ENCODE measurements at regions of chr19 and their contacts with region 1.

Region 1: DNA sequence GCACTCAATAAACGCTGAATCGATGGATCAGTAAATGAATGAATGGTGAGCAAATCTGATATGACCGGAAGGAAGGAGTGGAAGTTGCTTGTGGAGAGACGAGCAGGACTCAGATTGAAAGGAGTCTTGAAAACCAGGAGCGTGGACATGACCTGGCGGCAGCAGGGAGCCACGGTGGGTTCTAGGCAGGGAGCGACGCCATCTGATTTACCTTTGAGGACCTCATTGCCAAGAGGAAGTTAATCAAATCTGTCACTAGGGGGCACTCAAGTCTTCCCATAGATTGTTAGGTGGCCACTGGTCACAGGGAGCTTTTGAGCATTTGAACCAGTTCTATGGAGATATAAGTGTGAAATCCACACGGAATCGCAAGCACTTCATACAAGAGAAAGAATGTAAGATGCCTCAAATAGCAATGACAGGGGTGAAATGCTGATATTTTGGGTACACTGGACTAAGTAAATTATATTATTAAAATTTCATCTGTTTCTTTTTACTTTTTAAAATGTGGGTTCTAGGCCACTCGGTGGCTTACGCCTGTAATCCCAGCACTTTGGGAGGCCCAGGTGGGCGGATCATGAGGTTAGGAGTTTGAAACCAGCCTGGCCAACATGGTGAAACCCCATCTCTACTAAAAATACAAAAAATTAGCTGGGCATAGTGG is 9.2 kb upstream of the FBN3 start:
- DNase-seq: no peak
- ATAC-seq: peak; percentile 64 to 69
- H3K4me3 ChIP-seq: no peak overlapping the region
- H3K27ac ChIP-seq: no peak overlapping the region
- H3K4me1 ChIP-seq: peaks cover 5% of the 10 kb centered on the region
- H3K27me3 ChIP-seq: no peaks in the 10 kb centered on the region

Region 2: DNA sequence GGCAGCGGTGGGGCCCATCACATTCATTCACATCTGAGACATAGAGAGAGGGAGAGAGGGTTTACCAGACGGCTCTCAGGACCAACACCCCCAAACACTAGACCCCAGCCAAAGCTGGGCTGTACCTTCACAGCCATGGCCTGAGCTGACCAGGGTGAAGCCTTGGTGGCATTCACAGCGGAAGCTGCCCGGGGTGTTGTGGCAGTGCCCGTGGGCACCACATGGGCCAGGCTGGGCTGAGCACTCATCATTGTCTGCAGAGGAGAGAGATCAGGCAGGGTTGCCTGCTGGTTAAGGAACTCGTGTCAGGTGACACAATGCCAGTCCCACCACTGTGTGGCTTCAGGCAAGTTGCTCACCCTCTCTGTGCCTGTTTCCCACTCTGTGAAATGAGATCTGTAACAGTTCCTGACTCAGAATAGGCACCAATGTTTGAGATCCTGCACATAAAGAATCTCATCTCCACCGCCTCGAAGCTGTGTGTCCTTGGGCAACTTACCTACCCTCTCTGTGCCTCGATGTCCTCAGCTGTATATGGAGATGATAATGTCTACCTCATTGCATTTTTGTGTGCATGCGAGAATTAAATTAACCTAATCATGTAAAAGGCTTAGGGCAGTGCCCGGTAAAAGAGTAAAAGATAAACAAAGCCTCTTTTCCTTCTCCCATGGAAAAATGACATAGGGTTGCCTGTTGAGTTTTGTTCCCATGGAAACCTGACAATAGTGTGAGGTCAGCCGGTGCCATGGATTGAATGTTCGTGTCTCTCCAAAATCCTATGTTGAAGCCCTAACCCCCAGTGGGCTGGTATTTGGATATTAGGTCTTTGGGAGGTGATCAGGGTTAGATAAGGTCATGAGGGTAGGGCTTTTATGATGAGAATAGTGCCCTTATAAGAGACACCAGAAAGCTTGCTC is 83.1 kb before region 1 on chr19:
- intact Hi-C with region 1: no loop called
- DNase-seq: no peak
- ATAC-seq: no peak
- H3K4me3 ChIP-seq: no peak overlapping the region
- H3K27ac ChIP-seq: no peak overlapping the region
- H3K4me1 ChIP-seq: no peaks in the 10 kb centered on the region
- H3K27me3 ChIP-seq: no peaks in the 10 kb centered on the region

Region 3: GRCh38 chr19:8252922-8253589 is 94.5 kb after region 1 on chr19:
- intact Hi-C with region 1: loop called (anchors 2 to 10 kb)
- DNase-seq: peak; percentile 80 to 93 (median 93)
- ATAC-seq: peak; percentile 71 to 76
- H3K4me3 ChIP-seq: no peak overlapping the region
- H3K27ac ChIP-seq: no peak overlapping the region
- H3K4me1 ChIP-seq: no peaks in the 10 kb centered on the region
- H3K27me3 ChIP-seq: no peaks in the 10 kb centered on the region